Activated B cell treated with CpG ODN at 0.5 μM for 24 hours (primary cell): ENCODE measurements at regions of chr7 and their contacts with region 1.

Region 1: DNA sequence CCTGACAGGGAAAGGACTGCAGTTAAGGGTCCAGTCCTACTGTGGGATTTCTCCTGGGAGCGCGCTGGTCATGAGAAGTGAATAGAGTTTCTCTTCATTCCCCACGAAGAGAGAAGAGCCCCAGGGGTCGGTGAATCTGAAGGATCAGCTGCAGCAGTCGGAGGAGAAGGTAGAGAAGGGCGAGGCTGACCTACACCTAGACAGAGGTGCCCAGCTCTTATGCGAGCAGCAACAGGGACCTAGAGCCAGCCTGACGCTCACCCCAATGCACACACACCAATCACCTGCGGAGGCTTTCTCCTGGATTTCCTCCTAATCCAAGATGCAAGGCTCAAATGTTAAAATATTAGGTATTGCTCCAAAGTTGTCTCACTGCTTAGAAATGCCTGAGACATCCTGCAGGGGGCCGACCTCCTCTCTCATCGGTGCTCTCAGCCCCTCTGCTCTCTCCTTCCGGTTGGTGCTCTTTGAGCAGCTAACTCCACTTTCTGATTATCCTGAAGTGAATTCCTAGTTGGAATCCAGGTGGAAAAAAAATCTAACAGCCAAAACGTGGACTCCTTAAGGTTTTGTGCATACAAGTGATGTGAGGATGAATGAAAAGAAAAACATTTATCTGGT is 176.4 kb downstream of the AHR start:
- DNase-seq: no peak
- ATAC-seq: no peak
- H3K4me3 Mint-ChIP-seq: no peak overlapping the region
- H3K27ac Mint-ChIP-seq: no peak overlapping the region
- H3K4me1 Mint-ChIP-seq: peaks cover 19% of the 10 kb centered on the region
- H3K27me3 Mint-ChIP-seq: no peaks in the 10 kb centered on the region
- CTCF ChIP-seq: no peak

Region 2: DNA sequence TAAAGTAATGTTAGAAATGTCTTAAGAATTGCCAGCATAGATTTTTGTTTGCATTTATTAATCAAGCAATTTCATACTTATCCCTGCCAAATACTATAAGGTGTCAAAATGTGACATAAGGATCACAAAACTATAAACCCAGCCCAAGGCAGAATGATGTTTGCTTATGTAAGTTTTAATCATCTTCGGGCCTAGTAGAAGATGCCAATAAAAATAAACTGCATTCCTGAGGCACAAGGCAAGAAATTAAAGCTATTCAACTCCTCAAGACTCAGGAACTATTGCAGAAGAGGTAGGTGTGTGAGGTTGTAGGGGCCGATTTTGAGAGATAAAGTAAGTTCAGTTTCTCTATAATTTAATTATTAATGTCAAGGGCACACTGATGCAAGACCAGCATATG is 365.8 kb before region 1 on chr7:
- CTCF ChIA-PET with region 1: no interaction called
- POLR2A ChIA-PET with region 1: no interaction called
- intact Hi-C with region 1: loop called (anchors 5 kb)
- DNase-seq: no peak
- ATAC-seq: no peak
- H3K4me3 Mint-ChIP-seq: no peak overlapping the region
- H3K27ac Mint-ChIP-seq: no peak overlapping the region
- H3K4me1 Mint-ChIP-seq: no peaks in the 10 kb centered on the region
- H3K27me3 Mint-ChIP-seq: no peaks in the 10 kb centered on the region
- CTCF ChIP-seq: no peak

Region 3: GRCh38 chr7:17402628-17403278 is 72.1 kb before region 1 on chr7:
- CTCF ChIA-PET with region 1: no interaction called
- POLR2A ChIA-PET with region 1: no interaction called
- intact Hi-C with region 1: loop called (anchors 5 kb)
- DNase-seq: no peak
- ATAC-seq: no peak
- H3K4me3 Mint-ChIP-seq: peak overlapping the region; percentile 60
- H3K27ac Mint-ChIP-seq: peak overlapping the region; percentile 78
- H3K4me1 Mint-ChIP-seq: peaks cover 22% of the 10 kb centered on the region
- H3K27me3 Mint-ChIP-seq: no peaks in the 10 kb centered on the region
- CTCF ChIP-seq: no peak